Prostate gland (tissue), 2 donors: ENCODE measurements at regions of chr10 and their contacts with region 1.

Region 1: DNA sequence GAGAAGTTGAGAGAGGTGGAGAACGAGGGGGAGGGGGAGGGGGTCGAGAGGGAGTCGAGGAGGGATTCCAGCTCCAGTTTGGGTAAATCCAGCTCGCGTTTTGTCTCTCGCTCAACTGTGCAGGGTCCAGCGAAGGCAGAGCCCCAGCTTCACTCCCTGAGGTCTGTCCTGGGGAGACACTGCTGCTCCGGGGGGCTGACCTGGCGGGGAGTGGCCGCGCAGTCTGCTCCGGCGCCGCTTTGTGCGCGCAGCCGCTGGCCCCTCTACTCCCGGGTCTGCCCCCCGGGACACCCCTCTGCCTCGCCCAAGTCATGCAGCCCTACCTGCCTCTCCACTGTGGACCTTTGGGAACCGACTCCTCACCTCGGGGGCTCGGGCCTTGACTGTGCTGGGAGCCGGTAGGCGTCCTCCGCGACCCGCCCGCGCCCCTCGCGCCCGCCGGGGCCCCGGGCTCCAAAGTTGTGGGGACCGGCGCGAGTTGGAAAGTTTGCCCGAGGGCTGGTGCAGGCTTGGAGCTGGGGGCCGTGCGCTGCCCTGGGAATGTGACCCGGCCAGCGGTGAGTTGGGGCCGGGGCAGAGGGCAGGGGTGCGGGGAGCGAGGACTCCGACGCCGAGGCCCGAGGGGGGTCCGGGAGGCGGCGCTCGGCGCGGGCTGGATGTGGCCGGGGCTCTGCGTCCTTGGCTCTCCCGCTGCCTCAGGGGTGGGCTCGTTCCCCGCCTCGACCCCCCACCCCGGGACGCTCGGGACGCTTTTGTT is at the start of gene TET1:
- DNase-seq: no peak
- H3K4me3 ChIP-seq: peak within 1 kb of the TSS; percentile 79 to 81
- H3K27ac ChIP-seq: peak within 1 kb of the TSS; percentile 20 to 57
- H3K4me1 ChIP-seq: no peaks in the 10 kb centered on the region
- H3K27me3 ChIP-seq: no peaks in the 10 kb centered on the region
- CTCF ChIP-seq: no peak
- POLR2A ChIP-seq: peak; percentile 30
- total RNA-seq, gene TET1: 5.1 to 6.0 TPM

Region 2: GRCh38 chr10:68208424-68209042 is 351.8 kb before region 1 on chr10:
- intact Hi-C with region 1: no loop called
- DNase-seq: peak; percentile 5
- H3K4me3 ChIP-seq: no peak overlapping the region
- H3K27ac ChIP-seq: no peak overlapping the region
- H3K4me1 ChIP-seq: no peaks in the 10 kb centered on the region
- H3K27me3 ChIP-seq: no peaks in the 10 kb centered on the region
- CTCF ChIP-seq: peak in 1 of 4 experiments; percentile 41
- POLR2A ChIP-seq: no peak

Region 3: GRCh38 chr10:68598978-68599770 is 38.8 kb after region 1 on chr10:
- intact Hi-C with region 1: loop called (anchors 5 kb)
- DNase-seq: peak; percentile 22
- H3K4me3 ChIP-seq: peak overlapping the region in 1 of 2 donors; percentile 32
- H3K27ac ChIP-seq: peak overlapping the region; percentile 8 to 49
- H3K4me1 ChIP-seq: peaks cover 11% of the 10 kb centered on the region
- H3K27me3 ChIP-seq: no peaks in the 10 kb centered on the region
- CTCF ChIP-seq: no peak
- POLR2A ChIP-seq: no peak

Region 4: GRCh38 chr10:68897336-68897741 is 337.0 kb after region 1 on chr10:
- intact Hi-C with region 1: loop called (anchors 5 kb)
- DNase-seq: peak; percentile 61
- H3K4me3 ChIP-seq: no peak overlapping the region
- H3K27ac ChIP-seq: no peak overlapping the region
- H3K4me1 ChIP-seq: peaks cover 1% of the 10 kb centered on the region
- H3K27me3 ChIP-seq: no peaks in the 10 kb centered on the region
- CTCF ChIP-seq: peak in 2 of 4 experiments; percentile 52 to 69
- POLR2A ChIP-seq: no peak